Activated T-helper 2 cell treated with anti-CD3 and anti-CD28 coated beads, Interferon-gamma antibody, Interleukin-2, Interleukin-4, amounts not matched to agents 10 μg/mL and 5 μg/mL and 100 μg/mL, durations not matched to agents 14 hours and 24 hours and 36 hours (primary cell): ENCODE measurements at regions of chr13 and their contacts with region 1.

Region 1: GRCh38 chr13:40480012-40480914 is 186.2 kb downstream of the FOXO1 start:
- DNase-seq: no peak
- H3K4me3 Mint-ChIP-seq: no peak overlapping the region
- H3K27ac Mint-ChIP-seq: no peak overlapping the region
- H3K4me1 Mint-ChIP-seq: peaks cover 32% of the 10 kb centered on the region
- H3K27me3 Mint-ChIP-seq: no peaks in the 10 kb centered on the region

Region 2: GRCh38 chr13:40445557-40445990 is 34.7 kb before region 1 on chr13:
- intact Hi-C with region 1: loop called (anchors 5 kb)
- DNase-seq: no peak
- H3K4me3 Mint-ChIP-seq: no peak overlapping the region
- H3K27ac Mint-ChIP-seq: no peak overlapping the region
- H3K4me1 Mint-ChIP-seq: peaks cover 13% of the 10 kb centered on the region
- H3K27me3 Mint-ChIP-seq: no peaks in the 10 kb centered on the region

Region 3: DNA sequence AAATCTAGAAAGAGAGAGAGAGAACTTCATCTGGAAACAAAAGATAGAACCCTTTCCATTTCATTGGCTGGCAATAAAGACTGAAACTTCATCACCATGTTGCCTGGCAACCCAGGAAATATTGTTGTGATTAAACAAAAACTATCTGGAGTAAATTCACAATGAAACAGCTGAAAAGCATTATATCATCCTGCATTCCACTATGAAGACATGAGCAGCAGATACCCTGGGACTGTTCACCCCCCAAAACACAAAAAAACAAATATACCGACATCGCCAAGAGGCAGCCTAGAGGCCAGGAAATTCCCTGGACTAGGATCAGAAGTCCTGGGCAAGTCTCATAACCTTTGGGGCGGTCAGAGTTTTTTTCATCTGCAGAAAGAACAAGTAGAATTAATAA is 27.9 kb after region 1 on chr13:
- intact Hi-C with region 1: no loop called
- DNase-seq: no peak
- H3K4me3 Mint-ChIP-seq: no peak overlapping the region
- H3K27ac Mint-ChIP-seq: no peak overlapping the region
- H3K4me1 Mint-ChIP-seq: peaks cover 8% of the 10 kb centered on the region
- H3K27me3 Mint-ChIP-seq: no peaks in the 10 kb centered on the region

Region 4: DNA sequence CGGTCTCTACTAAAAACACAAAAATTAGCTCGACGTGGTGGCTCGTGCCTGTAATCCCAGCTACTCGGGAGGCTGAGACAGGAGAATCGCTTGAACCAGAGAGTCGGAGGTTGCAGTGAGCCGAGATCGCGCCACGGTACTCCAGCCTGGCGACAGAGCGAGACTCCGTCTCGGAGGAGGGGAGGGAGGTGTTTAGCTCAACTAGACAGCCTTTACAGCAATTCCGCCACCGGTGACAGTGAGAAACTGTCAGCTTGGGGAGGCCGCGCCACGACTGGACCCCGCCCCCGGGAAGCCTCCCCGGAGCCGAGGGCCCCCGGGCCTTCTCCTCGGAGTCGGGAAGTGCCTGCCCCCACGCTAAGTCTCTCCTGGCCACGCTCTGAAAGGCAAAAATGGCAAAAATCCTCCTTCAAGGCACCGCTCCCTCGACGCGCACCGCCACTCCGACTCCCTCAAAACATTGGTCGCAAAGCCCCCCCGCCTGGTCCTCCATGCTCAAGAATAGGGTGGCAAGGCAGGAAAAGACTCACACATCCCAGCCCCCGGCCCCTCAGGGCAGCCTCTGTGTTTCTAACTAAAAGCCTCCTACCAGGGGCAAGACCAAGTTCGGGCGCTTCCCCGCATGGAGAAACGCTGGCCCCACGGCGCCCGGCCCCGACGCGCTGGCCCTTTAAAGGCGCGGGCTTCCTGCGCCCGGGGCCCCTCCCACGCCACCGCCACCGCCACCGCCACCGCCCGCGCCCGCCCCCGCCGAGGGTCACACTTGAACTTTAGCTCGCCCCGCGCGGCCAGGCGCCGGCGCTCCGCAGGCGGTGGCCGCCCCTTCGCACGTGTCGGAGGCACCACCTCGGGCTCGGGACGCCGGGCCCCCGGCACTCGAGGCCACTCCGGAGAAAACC is 184.1 kb after region 1 on chr13:
- intact Hi-C with region 1: no loop called
- DNase-seq: peak; percentile 75
- H3K4me3 Mint-ChIP-seq: peak overlapping the region; percentile 92
- H3K27ac Mint-ChIP-seq: peak overlapping the region; percentile 95
- H3K4me1 Mint-ChIP-seq: peaks cover 48% of the 10 kb centered on the region
- H3K27me3 Mint-ChIP-seq: no peaks in the 10 kb centered on the region

Region 5: GRCh38 chr13:40789275-40790133 is 309.2 kb after region 1 on chr13 and contains the start of gene SLC25A15:
- intact Hi-C with region 1: no loop called
- DNase-seq: peak; percentile 62
- H3K4me3 Mint-ChIP-seq: peak within 1 kb of the TSS; percentile 73
- H3K27ac Mint-ChIP-seq: peak within 1 kb of the TSS; percentile 76
- H3K4me1 Mint-ChIP-seq: peaks cover 36% of the 10 kb centered on the region
- H3K27me3 Mint-ChIP-seq: no peaks in the 10 kb centered on the region
- total RNA-seq, gene SLC25A15: 21.8 and 24.1 TPM in 2 replicates